B cell (primary cell): ENCODE measurements at regions of chr4 and their contacts with region 1.

Region 1: DNA sequence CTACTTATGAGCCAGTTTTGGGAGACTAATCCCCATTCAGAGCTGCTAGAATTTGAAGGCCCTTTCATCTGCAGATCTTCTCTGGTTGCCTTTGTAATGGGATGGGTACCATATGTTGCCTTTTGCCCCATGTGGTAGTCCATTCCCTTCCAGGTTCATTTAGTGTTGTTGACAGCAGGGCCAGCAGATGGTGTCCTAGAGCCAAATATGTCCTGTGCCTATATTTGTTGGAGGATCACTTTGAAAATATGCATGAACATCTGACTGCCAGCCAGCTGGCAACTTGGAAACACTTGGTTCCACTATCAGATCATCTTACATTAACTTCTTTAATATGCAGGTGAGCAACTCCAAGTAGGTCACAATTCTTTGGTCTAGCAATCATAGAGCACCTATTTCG is 30.4 kb downstream of the CFAP299 start:
- DNase-seq: peak; percentile 65
- ATAC-seq: peak; percentile 67
- H3K4me3 ChIP-seq: no peak overlapping the region
- H3K4me3 Mint-ChIP-seq: no peak overlapping the region
- H3K27ac ChIP-seq: no peak overlapping the region
- H3K27ac Mint-ChIP-seq: no peak overlapping the region
- H3K4me1 ChIP-seq: no peaks in the 10 kb centered on the region
- H3K4me1 Mint-ChIP-seq: peaks cover 7% of the 10 kb centered on the region
- H3K27me3 ChIP-seq: peaks cover 0 to under 1% (median under 1%) of the 10 kb centered on the region in 4 experiments
- H3K27me3 Mint-ChIP-seq: no peaks in the 10 kb centered on the region
- CTCF ChIP-seq: peak; percentile 80

Region 2: GRCh38 chr4:80322716-80323115 is 43.2 kb before region 1 on chr4:
- CTCF ChIA-PET with region 1: no interaction called
- POLR2A ChIA-PET with region 1: no interaction called
- intact Hi-C with region 1: no loop called
- DNase-seq: no peak
- ATAC-seq: no peak
- H3K4me3 ChIP-seq: no peak overlapping the region
- H3K4me3 Mint-ChIP-seq: no peak overlapping the region
- H3K27ac ChIP-seq: no peak overlapping the region
- H3K27ac Mint-ChIP-seq: no peak overlapping the region
- H3K4me1 ChIP-seq: no peaks in the 10 kb centered on the region
- H3K4me1 Mint-ChIP-seq: no peaks in the 10 kb centered on the region
- H3K27me3 ChIP-seq: peaks cover 0 to 5% (median 0%) of the 10 kb centered on the region in 4 experiments
- H3K27me3 Mint-ChIP-seq: peaks cover 15% of the 10 kb centered on the region
- CTCF ChIP-seq: no peak

Region 3: GRCh38 chr4:80610845-80611677 is 245.1 kb after region 1 on chr4:
- CTCF ChIA-PET with region 1: no interaction called
- POLR2A ChIA-PET with region 1: no interaction called
- intact Hi-C with region 1: loop called (anchors 10 kb)
- DNase-seq: peak; percentile 78
- ATAC-seq: peak; percentile 75
- H3K4me3 ChIP-seq: peak overlapping the region in 3 of 5 experiments; percentile 5 to 42 (median 27)
- H3K4me3 Mint-ChIP-seq: peak overlapping the region; percentile 79
- H3K27ac ChIP-seq: peak overlapping the region; percentile 49 to 77
- H3K27ac Mint-ChIP-seq: peak overlapping the region; percentile 86
- H3K4me1 ChIP-seq: peaks cover 20 to 41% of the 10 kb centered on the region in 2 donors
- H3K4me1 Mint-ChIP-seq: peaks cover 39% of the 10 kb centered on the region
- H3K27me3 ChIP-seq: no peaks in the 10 kb centered on the region
- H3K27me3 Mint-ChIP-seq: no peaks in the 10 kb centered on the region
- CTCF ChIP-seq: no peak

Region 4: GRCh38 chr4:80989921-80990544 is 624.1 kb after region 1 on chr4:
- CTCF ChIA-PET with region 1: interaction called, 41 read pairs
- POLR2A ChIA-PET with region 1: no interaction called
- intact Hi-C with region 1: loop called (anchors 1 kb)
- DNase-seq: peak; percentile 66
- ATAC-seq: peak; percentile 36
- H3K4me3 ChIP-seq: no peak overlapping the region
- H3K4me3 Mint-ChIP-seq: peak overlapping the region; percentile 11
- H3K27ac ChIP-seq: no peak overlapping the region
- H3K27ac Mint-ChIP-seq: no peak overlapping the region
- H3K4me1 ChIP-seq: peaks cover 11 to 18% of the 10 kb centered on the region in 2 donors
- H3K4me1 Mint-ChIP-seq: peaks cover 25% of the 10 kb centered on the region
- H3K27me3 ChIP-seq: no peaks in the 10 kb centered on the region
- H3K27me3 Mint-ChIP-seq: no peaks in the 10 kb centered on the region
- CTCF ChIP-seq: peak; percentile 93

Region 5: DNA sequence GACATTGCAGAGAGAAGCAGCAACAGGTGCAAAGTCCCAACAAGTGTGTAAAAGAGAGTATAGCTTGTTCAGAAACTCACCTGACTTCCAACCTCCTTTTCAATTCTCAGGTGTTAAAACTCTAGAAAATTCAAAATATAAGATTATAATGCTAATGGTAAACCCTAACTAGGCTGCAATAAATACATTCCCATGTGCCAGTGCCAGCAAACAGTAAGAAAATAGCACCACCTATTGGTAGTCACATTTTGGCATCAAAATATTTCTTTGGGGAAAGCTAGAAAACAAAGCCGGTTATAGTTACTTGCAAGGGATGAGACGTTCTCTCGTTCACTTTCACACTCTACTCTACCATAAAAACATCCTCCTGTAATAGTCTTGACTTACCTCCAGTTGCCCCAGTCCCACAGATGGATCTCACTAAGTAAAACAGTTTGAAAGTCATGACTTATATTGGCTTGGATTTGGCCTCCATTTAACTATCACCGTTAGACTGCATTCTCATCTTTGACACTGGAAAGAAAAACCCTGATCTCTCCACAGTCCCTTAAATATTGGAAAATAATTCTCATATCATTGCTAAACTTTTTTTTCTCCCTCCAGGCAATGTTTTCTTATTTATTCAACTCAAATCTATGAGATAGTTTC is 674.2 kb after region 1 on chr4:
- CTCF ChIA-PET with region 1: interaction called, 107 read pairs
- POLR2A ChIA-PET with region 1: no interaction called
- intact Hi-C with region 1: loop called (anchors 1 kb)
- DNase-seq: peak; percentile 62
- ATAC-seq: no peak
- H3K4me3 ChIP-seq: no peak overlapping the region
- H3K4me3 Mint-ChIP-seq: no peak overlapping the region
- H3K27ac ChIP-seq: no peak overlapping the region
- H3K27ac Mint-ChIP-seq: no peak overlapping the region
- H3K4me1 ChIP-seq: peaks cover 5 to 10% of the 10 kb centered on the region in 2 donors
- H3K4me1 Mint-ChIP-seq: peaks cover 14% of the 10 kb centered on the region
- H3K27me3 ChIP-seq: no peaks in the 10 kb centered on the region
- H3K27me3 Mint-ChIP-seq: peaks cover 10% of the 10 kb centered on the region
- CTCF ChIP-seq: peak; percentile 79

Region 6: DNA sequence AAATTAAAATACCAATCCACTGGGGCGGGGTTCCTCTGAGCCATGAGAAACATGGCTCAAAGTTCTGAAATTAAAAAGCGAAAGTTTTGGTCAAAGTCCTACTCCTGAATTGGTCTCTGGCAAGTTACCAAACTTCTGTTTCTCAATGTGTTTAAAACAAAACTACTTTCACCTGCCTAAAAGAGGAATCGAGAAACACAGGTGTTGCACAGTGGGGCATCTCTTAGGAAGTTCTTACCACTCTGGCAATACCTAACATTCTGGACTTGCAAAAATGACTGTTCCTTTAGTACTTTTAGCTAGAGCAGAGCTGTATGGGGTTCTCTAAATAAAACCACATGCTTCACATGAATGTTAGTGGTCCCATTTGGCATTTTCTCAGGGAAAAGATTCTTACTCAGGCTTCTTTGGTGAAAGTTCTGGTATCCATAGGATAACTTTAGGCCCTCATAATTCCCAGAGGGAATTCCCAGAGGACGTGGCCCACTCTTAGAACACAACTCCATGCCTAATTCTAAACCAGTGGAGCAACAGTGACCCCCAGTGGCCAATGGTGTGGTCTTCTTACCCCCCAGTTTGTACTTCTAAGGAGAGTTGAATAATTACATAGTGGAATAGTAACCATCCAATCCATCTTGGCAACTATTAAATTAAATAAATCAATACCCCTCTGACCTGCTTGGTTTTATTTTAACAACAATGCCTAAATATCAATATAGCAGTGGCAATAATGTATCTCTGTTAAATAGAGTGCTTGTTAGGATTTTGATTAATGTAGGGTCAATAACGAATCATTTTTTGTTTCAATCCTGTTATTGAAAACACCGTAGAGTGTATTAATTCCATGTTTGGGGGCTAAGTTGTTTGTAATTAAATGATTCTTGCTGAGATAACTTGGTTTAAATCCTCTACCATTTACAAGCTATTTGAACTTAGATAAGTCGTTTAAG is 686.5 kb after region 1 on chr4:
- CTCF ChIA-PET with region 1: interaction called, 47 read pairs
- POLR2A ChIA-PET with region 1: no interaction called
- intact Hi-C with region 1: loop called (anchors 1 kb)
- DNase-seq: peak; percentile 72
- ATAC-seq: peak; percentile 79
- H3K4me3 ChIP-seq: no peak overlapping the region
- H3K4me3 Mint-ChIP-seq: no peak overlapping the region
- H3K27ac ChIP-seq: peak overlapping the region; percentile 26 to 36
- H3K27ac Mint-ChIP-seq: peak overlapping the region; percentile 43
- H3K4me1 ChIP-seq: peaks cover 8 to 14% of the 10 kb centered on the region in 2 donors
- H3K4me1 Mint-ChIP-seq: peaks cover 12% of the 10 kb centered on the region
- H3K27me3 ChIP-seq: no peaks in the 10 kb centered on the region
- H3K27me3 Mint-ChIP-seq: peaks cover 5% of the 10 kb centered on the region
- CTCF ChIP-seq: peak; percentile 90

Region 7: GRCh38 chr4:81351654-81352445 is 985.9 kb after region 1 on chr4:
- CTCF ChIA-PET with region 1: interaction called, 14 read pairs
- POLR2A ChIA-PET with region 1: no interaction called
- intact Hi-C with region 1: no loop called
- DNase-seq: peak; percentile 73
- ATAC-seq: peak; percentile 60
- H3K4me3 ChIP-seq: no peak overlapping the region
- H3K4me3 Mint-ChIP-seq: no peak overlapping the region
- H3K27ac ChIP-seq: no peak overlapping the region
- H3K27ac Mint-ChIP-seq: no peak overlapping the region
- H3K4me1 ChIP-seq: no peaks in the 10 kb centered on the region
- H3K4me1 Mint-ChIP-seq: no peaks in the 10 kb centered on the region
- H3K27me3 ChIP-seq: no peaks in the 10 kb centered on the region
- H3K27me3 Mint-ChIP-seq: peaks cover 14% of the 10 kb centered on the region
- CTCF ChIP-seq: peak; percentile 93

Region 8: DNA sequence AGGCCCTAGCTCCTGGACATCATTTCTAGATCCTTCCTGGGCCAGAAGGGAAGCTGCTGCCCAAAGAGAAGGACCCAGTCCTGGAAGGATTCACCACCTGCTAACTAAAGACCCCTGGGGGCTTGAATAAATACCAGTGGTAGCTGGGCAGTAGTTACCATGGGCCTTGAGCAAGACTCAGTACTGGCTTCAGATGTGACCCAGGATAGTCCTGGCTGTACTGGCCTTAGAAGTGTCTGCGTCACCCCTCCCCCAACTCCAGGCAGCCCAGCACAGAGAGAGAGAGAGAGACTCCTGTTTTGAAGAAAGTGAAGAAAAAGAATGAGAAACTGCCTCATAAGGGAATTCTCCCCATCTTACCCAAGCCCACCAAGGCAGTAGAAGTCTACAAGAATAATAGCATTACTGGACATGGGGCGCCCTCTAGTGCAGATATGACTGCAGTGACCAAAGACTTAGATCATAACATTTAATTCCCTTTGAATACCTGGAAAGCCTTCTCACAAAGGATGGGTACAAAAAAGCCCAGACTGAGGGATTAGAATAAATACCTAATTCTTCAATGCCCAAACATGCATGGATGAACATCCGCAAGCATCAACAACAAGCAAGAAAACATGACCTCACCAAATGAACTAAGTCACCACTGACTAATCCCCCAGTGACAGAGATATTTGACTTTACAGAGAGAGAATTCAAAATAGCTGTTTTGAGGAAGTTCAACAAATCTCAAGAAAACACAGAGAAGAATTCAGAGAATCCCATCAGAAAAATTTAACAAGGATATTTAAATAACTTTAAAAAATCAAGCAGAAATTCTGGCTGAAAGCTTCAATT is 1836.1 kb after region 1 on chr4:
- CTCF ChIA-PET with region 1: no interaction called
- POLR2A ChIA-PET with region 1: no interaction called
- intact Hi-C with region 1: loop called (anchors 5 kb)
- DNase-seq: peak; percentile 69
- ATAC-seq: peak; percentile 43
- H3K4me3 ChIP-seq: no peak overlapping the region
- H3K4me3 Mint-ChIP-seq: no peak overlapping the region
- H3K27ac ChIP-seq: no peak overlapping the region
- H3K27ac Mint-ChIP-seq: no peak overlapping the region
- H3K4me1 ChIP-seq: no peaks in the 10 kb centered on the region
- H3K4me1 Mint-ChIP-seq: no peaks in the 10 kb centered on the region
- H3K27me3 ChIP-seq: no peaks in the 10 kb centered on the region
- H3K27me3 Mint-ChIP-seq: peaks cover 16% of the 10 kb centered on the region
- CTCF ChIP-seq: peak; percentile 85